Activated CD4-positive, alpha-beta T cell treated with anti-CD3 and anti-CD28 coated beads for 36 hours (primary cell): ENCODE measurements at regions of chr11 and their contacts with region 1.

Region 1: DNA sequence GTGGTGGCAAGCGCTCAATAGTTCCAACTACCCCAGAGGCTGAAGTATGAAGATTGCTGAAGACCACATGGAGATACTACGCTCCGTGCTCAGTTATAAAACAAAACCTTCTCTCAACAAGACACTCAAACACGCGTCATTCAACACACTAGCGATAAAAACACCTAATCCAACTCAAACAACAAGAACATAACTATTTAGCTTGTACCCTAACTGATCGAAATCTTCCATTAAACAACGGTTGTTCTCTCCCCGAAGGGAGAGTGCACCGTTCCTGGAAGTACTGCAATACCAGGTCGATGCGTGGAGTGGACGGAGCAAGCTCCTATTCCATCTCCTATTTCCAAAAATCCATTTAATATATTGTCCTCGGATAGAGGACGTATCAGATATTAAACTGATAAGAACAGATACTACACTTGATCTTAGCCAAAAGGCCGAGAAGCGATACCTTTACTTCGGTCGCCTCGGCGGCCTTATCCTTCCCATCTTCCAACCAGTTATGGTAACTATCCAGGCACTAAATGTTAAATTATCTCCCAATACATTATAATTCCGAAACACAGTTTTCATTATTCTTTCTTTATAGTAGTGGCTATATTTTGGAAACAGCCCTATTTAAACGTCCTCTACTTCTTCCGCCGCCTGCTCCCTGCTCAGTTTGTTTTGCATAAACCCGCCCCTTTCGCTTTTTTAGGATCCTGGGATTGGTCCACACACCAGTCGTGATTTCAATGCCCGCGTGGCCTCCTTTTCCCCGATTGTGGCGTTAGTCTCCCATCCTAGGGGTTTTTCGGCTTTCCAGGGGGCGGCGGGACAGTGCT is 2.2 kb upstream of the WDR74 start:
- DNase-seq: peak; percentile 86
- ATAC-seq: peak; percentile 67
- H3K4me3 Mint-ChIP-seq: no peak overlapping the region
- H3K27ac Mint-ChIP-seq: no peak overlapping the region
- H3K4me1 Mint-ChIP-seq: peaks cover 24% of the 10 kb centered on the region
- H3K27me3 Mint-ChIP-seq: no peaks in the 10 kb centered on the region

Region 2: GRCh38 chr11:62573592-62574362 is 267.8 kb before region 1 on chr11 and contains the start of gene EEF1G:
- CTCF ChIA-PET with region 1: no interaction called
- POLR2A ChIA-PET with region 1: interaction called, 12 read pairs
- intact Hi-C with region 1: no loop called
- DNase-seq: peak; percentile 99
- ATAC-seq: peak; percentile 97
- H3K4me3 Mint-ChIP-seq: peak within 1 kb of the TSS; percentile 93
- H3K27ac Mint-ChIP-seq: peak within 1 kb of the TSS; percentile 97
- H3K4me1 Mint-ChIP-seq: peaks cover 43% of the 10 kb centered on the region
- H3K27me3 Mint-ChIP-seq: no peaks in the 10 kb centered on the region
- total RNA-seq, gene EEF1G: 1,986 to 2,351 TPM

Region 3: GRCh38 chr11:62645956-62646824 is 195.4 kb before region 1 on chr11 and contains the start of gene GANAB:
- CTCF ChIA-PET with region 1: no interaction called
- POLR2A ChIA-PET with region 1: interaction called, 10 read pairs
- intact Hi-C with region 1: no loop called
- DNase-seq: peak; percentile 100
- ATAC-seq: peak; percentile 99
- H3K4me3 Mint-ChIP-seq: peak within 1 kb of the TSS; percentile 93
- H3K27ac Mint-ChIP-seq: peak within 1 kb of the TSS; percentile 93
- H3K4me1 Mint-ChIP-seq: peaks cover 34% of the 10 kb centered on the region
- H3K27me3 Mint-ChIP-seq: no peaks in the 10 kb centered on the region
- total RNA-seq, gene GANAB: 208 to 218 TPM

Region 4: DNA sequence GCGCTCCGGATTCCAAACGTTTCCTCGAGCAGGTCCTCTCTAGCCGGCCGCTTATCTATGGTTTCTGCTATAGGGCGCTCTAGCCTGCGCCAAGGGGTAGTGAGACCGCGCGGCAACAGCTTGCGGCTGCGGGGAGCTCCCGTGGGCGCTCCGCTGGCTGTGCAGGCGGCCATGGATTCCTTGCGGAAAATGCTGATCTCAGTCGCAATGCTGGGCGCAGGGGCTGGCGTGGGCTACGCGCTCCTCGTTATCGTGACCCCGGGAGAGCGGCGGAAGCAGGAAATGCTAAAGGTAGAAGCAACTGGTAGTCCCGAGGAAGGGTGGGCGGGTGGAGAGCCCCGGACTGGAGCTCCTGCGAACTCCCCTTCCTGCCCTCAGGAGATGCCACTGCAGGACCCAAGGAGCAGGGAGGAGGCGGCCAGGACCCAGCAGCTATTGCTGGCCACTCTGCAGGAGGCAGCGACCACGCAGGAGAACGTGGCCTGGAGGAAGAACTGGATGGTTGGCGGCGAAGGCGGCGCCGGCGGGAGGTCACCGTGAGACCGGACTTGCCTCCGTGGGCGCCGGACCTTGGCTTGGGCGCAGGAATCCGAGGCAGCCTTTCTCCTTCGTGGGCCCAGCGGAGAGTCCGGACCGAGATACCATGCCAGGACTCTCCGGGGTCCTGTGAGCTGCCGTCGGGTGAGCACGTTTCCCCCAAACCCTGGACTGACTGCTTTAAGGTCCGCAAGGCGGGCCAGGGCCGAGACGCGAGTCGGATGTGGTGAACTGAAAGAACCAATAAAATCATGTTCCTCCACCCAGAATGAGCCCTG is 169.8 kb before region 1 on chr11 and contains the starts of genes LBHD1 and UQCC3:
- CTCF ChIA-PET with region 1: no interaction called
- POLR2A ChIA-PET with region 1: interaction called, 24 read pairs
- intact Hi-C with region 1: loop called (anchors 2 to 5 kb)
- DNase-seq: peak; percentile 86
- ATAC-seq: peak; percentile 88
- H3K4me3 Mint-ChIP-seq: peak within 1 kb of the TSS; percentile 91
- H3K27ac Mint-ChIP-seq: peak within 1 kb of the TSS; percentile 96
- H3K4me1 Mint-ChIP-seq: peaks cover 54% of the 10 kb centered on the region
- H3K27me3 Mint-ChIP-seq: no peaks in the 10 kb centered on the region
- total RNA-seq, gene LBHD1: 11.9 to 15.5 TPM
- total RNA-seq, gene UQCC3: 4.1 to 6.4 TPM

Region 5: DNA sequence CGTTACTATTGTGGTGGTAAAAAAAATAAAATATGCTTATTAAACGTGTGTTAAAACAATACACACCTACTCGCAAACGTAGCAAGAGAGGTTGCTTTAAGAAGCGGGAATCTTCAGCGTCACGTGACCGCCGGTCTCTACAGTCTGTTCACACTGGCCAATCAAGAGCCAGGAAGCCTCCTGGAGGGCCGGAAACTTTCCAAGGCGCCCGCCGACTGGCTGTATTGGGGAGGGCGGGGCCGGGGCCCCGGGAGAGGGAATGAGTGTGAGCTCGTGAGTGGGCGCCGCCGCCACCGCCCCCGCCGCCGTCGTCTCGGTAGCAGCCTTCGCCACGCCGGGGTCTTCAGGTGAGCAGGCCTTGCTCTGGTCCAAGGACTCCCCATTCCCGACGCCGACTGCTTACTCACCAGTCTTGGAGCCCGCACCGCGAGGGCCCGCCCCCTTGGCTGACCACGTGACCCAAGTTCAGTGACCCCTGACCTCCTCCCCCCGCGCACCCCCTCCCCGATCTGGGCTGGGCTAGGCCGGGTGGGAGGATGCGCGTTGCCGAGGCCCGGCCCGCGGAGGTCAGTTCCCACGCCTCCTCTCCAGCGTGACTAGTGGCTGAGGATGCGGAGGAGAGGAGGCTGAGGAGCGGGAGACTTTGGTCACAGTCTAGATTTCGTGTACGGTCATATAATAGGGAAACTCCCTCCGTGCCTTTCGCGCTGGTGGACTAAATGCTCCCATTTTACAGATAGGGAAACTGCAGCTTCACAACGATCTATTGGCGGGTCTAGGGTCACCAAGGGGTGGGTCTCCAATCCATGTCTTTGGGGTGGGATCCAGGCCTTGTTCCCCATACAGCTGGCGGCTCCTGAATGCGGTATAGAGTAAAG is 70.2 kb before region 1 on chr11 and contains the start of gene TAF6L:
- CTCF ChIA-PET with region 1: no interaction called
- POLR2A ChIA-PET with region 1: interaction called, 19 read pairs
- intact Hi-C with region 1: loop called in 1 of 2 experiments (anchors 1 kb)
- DNase-seq: peak; percentile 98
- ATAC-seq: peak; percentile 87
- H3K4me3 Mint-ChIP-seq: peak within 1 kb of the TSS; percentile 85
- H3K27ac Mint-ChIP-seq: peak within 1 kb of the TSS; percentile 89
- H3K4me1 Mint-ChIP-seq: peaks cover 26% of the 10 kb centered on the region
- H3K27me3 Mint-ChIP-seq: no peaks in the 10 kb centered on the region
- total RNA-seq, gene TAF6L: 10.2 to 12.6 TPM

Region 6: DNA sequence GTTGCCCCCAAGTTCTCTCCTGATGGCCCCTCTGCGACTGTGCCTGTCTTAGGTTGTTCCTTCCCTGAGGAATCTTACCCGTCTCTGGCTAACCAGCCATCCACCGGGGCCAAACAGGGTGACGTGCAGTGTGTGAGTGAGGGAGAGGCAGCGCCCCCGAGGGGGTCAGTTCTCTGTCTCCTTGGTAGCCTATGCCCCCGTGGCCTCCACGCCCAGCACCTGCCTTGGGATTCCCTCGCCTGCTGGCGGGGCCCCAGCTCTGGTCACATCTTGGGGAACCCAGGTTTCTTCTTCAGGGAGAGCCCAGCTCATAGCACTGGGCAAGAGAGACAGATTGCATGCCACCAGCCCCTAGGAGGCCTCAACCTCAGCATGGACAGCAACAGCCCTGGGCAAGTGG is 42.1 kb before region 1 on chr11:
- CTCF ChIA-PET with region 1: no interaction called
- POLR2A ChIA-PET with region 1: interaction called, 13 read pairs
- intact Hi-C with region 1: no loop called
- DNase-seq: no peak
- ATAC-seq: no peak
- H3K4me3 Mint-ChIP-seq: no peak overlapping the region
- H3K27ac Mint-ChIP-seq: peak overlapping the region; percentile 5
- H3K4me1 Mint-ChIP-seq: peaks cover 24% of the 10 kb centered on the region
- H3K27me3 Mint-ChIP-seq: no peaks in the 10 kb centered on the region

Region 7: GRCh38 chr11:62855571-62856332 is 14.2 kb after region 1 on chr11:
- CTCF ChIA-PET with region 1: interaction called, 8 read pairs
- POLR2A ChIA-PET with region 1: interaction called, 383 read pairs
- intact Hi-C with region 1: loop called (anchors 1 kb)
- DNase-seq: peak; percentile 99
- ATAC-seq: peak; percentile 83
- H3K4me3 Mint-ChIP-seq: peak overlapping the region; percentile 99
- H3K27ac Mint-ChIP-seq: peak overlapping the region; percentile 97
- H3K4me1 Mint-ChIP-seq: peaks cover 53% of the 10 kb centered on the region
- H3K27me3 Mint-ChIP-seq: no peaks in the 10 kb centered on the region